ENCODE measurements at regions of chr5 and their contacts with region 1.

Region 1: GRCh38 chr5:150458819-150459557 is 9.4 kb upstream of the RPS14 start:
- DNase-seq: no peak
- H3K4me3 ChIP-seq: peak overlapping the region in 1 of 2 donors; percentile 33
- H3K27ac ChIP-seq: peak overlapping the region; percentile 2
- H3K4me1 ChIP-seq: peaks cover 10% of the 10 kb centered on the region
- H3K27me3 ChIP-seq: no peaks in the 10 kb centered on the region
- CTCF ChIP-seq: peak; percentile 76 to 93 (median 84)
- POLR2A ChIP-seq: no peak

Region 2: GRCh38 chr5:150523472-150524350 is 64.7 kb after region 1 on chr5:
- intact Hi-C with region 1: loop called (anchors 5 kb)
- DNase-seq: no peak
- H3K4me3 ChIP-seq: no peak overlapping the region
- H3K27ac ChIP-seq: peak overlapping the region; percentile 22
- H3K4me1 ChIP-seq: peaks cover 50% of the 10 kb centered on the region
- H3K27me3 ChIP-seq: no peaks in the 10 kb centered on the region
- CTCF ChIP-seq: peak; percentile 24 to 54 (median 47)
- POLR2A ChIP-seq: no peak